ENCODE measurements at regions of chr1 and their contacts with region 1.

Region 1: GRCh38 chr1:174743654-174744561 is 255.8 kb upstream of the CACYBP start:
- DNase-seq: no peak
- H3K4me3 ChIP-seq: no peak overlapping the region
- H3K27ac ChIP-seq: no peak overlapping the region
- H3K4me1 ChIP-seq: no peaks in the 10 kb centered on the region
- H3K27me3 ChIP-seq: no peaks in the 10 kb centered on the region
- CTCF ChIP-seq: peak in 2 of 3 donors; percentile 42 to 51
- EP300 ChIP-seq: no peak
- POLR2A ChIP-seq: no peak

Region 2: DNA sequence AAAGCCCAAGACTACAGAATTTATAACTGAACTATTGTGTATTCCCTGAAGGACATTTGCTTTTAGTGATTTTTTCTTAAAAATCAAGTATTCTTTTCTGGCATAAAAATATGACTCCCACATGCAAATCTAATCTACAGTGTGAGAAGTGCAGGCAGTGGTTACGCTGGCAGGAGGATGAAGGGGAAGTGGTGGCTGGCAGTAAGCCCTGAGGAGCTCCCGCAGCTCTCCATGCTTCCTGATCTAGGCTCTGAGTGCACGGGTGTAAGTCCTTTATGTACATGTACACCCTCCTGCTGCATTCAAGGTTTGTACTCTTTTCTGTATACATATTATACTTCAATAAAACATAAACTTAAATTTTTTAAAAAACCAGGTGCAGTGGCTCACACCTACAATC is 1334.3 kb before region 1 on chr1:
- intact Hi-C with region 1: loop called in 1 of 4 experiments (anchors 10 kb)
- DNase-seq: peak; percentile 28 to 63 (median 45)
- H3K4me3 ChIP-seq: no peak overlapping the region
- H3K27ac ChIP-seq: no peak overlapping the region
- H3K4me1 ChIP-seq: peaks cover 9% of the 10 kb centered on the region
- H3K27me3 ChIP-seq: no peaks in the 10 kb centered on the region
- CTCF ChIP-seq: no peak
- EP300 ChIP-seq: no peak
- POLR2A ChIP-seq: no peak

Region 3: GRCh38 chr1:174262349-174263241 is 481.3 kb before region 1 on chr1:
- intact Hi-C with region 1: loop called in 3 of 4 experiments (anchors 2 to 10 kb)
- DNase-seq: no peak
- H3K4me3 ChIP-seq: no peak overlapping the region
- H3K27ac ChIP-seq: no peak overlapping the region
- H3K4me1 ChIP-seq: no peaks in the 10 kb centered on the region
- H3K27me3 ChIP-seq: no peaks in the 10 kb centered on the region
- CTCF ChIP-seq: peak; percentile 25 to 42 (median 35)
- EP300 ChIP-seq: no peak
- POLR2A ChIP-seq: no peak

Measured in ovary (tissue), 10 donors.